ENCODE measurements at regions of chr14 and their contacts with region 1.

Region 1: DNA sequence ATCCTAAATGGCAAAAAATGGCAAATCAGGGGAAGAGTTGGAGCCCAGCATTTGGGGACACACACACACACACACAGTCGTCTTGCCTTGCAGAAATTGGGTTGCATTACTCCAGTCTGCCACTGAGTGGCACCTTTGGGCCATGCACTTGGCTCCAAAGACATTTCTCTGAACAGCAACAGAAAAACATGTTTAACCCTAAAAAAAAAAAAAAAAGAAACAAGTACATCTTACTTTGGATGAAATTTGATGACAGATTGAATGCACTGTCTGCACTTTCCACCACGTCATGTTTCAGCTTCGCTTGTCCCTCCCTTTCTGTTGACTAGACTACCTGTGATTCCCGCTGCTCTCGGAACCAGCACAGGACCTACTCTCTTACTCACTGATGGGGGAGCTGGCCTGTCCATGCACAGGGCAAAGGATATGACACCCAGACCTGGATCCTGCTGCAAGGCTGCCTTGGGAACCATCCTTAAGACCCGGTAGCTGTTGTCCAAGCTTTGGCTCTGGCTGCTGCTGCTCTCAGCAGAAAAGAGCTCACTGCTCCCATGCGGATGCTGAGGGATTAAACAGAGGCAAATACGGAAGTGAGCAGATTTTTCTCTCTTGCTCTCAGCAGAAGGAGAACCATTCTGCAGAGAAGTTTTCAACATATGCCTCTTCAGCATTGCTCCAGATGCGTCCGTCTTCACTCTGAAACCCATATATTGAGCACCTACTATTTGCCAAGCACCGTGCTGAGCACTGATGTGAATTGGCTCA is 376.8 kb downstream of the DPF3 start:
- DNase-seq: peak; percentile 73
- H3K4me3 Mint-ChIP-seq: no peak overlapping the region
- H3K27ac Mint-ChIP-seq: no peak overlapping the region
- H3K4me1 Mint-ChIP-seq: peaks cover 87% of the 10 kb centered on the region
- H3K27me3 Mint-ChIP-seq: peaks cover 2% of the 10 kb centered on the region

Region 2: DNA sequence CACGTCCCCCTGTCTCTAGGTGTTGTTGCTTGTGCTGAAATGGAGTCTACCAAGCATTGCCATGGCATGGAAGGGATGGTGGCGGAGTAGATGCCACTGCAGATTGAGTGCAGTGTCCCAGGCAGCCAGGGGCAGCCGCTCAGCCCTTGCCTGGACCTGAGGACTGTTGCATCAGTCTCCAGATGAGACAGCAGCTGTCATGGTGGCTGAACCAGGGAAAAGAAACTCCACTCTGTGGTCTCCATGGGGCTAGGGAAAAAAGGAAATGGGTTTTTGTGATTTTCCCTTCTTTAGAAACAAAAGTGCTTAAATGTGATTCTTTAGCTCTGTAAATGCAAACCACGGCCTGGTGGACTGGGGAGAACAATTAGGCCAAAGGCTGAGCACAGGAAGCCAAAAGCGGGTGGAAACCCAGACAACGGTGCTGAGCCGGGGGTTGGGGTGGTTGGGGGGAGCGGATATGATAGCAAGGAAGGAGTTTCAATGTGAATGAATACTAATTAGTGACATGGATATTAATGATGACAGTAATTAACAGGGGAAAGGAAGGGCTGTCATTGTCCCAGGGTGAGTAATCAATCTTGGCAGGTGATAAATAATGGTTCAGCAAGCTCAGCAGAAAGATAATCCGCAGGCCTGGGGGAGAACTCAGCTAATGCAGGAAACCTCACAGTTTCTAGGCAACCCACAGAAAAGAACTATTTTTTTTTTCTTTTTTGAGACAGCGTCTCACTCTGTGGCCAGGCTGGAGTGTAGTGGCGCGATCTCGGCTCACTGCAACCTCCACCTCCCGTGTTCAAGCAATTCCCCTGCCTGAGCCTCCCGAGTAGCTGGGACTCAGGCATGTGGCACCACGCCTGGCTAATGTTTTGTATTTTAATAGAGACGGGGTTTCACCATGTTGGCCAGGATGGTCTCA is 65.8 kb before region 1 on chr14:
- intact Hi-C with region 1: loop called (anchors 2 kb)
- DNase-seq: peak; percentile 41
- H3K4me3 Mint-ChIP-seq: peak overlapping the region; percentile 19
- H3K27ac Mint-ChIP-seq: peak overlapping the region; percentile 84
- H3K4me1 Mint-ChIP-seq: peaks cover 65% of the 10 kb centered on the region
- H3K27me3 Mint-ChIP-seq: peaks cover 1% of the 10 kb centered on the region

Region 3: DNA sequence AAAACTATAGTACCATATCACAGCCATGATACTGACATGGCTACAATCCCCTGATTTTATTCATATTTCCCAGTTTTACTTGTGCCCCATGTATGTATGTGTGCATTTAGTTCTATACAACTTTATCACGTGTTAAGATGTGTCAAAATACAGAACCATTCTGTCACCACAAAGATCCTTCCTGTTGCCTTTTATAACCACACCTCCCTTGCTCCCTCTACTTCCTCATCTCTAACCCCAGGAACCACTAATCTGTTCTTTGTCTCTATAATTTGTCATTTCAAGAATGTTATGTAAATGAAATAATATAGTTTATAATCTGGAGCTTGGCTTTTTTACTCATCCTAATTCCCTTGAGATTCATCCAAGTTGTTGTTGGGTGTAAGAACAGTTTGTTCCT is 18.4 kb after region 1 on chr14:
- intact Hi-C with region 1: loop called (anchors 1 kb)
- DNase-seq: peak; percentile 14
- H3K4me3 Mint-ChIP-seq: no peak overlapping the region
- H3K27ac Mint-ChIP-seq: peak overlapping the region; percentile 52
- H3K4me1 Mint-ChIP-seq: peaks cover 76% of the 10 kb centered on the region
- H3K27me3 Mint-ChIP-seq: peaks cover 4% of the 10 kb centered on the region

Region 4: DNA sequence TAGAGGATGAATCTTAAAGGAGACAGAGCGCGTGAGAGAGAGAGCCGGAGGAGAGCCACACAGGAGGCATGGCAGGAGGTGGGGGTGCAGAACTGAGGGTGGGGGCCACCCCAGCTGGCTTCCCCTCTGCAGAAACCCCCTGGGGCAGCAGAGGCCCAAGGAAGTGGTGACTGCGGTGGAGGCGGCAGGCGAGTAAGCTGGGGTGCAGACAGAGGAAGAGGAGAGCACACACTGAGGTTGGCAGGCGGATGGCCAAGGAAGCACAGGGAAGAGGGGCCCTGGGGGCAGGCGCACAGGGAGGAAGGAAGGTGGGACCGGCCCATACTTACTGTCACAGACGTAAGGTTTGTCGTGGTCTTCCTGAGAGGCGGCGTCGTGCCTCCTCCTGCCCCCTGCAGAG is 197.0 kb after region 1 on chr14:
- intact Hi-C with region 1: loop called (anchors 2 kb)
- DNase-seq: peak; percentile 55
- H3K4me3 Mint-ChIP-seq: peak overlapping the region; percentile 40
- H3K27ac Mint-ChIP-seq: peak overlapping the region; percentile 36
- H3K4me1 Mint-ChIP-seq: peaks cover 37% of the 10 kb centered on the region
- H3K27me3 Mint-ChIP-seq: no peaks in the 10 kb centered on the region

Region 5: DNA sequence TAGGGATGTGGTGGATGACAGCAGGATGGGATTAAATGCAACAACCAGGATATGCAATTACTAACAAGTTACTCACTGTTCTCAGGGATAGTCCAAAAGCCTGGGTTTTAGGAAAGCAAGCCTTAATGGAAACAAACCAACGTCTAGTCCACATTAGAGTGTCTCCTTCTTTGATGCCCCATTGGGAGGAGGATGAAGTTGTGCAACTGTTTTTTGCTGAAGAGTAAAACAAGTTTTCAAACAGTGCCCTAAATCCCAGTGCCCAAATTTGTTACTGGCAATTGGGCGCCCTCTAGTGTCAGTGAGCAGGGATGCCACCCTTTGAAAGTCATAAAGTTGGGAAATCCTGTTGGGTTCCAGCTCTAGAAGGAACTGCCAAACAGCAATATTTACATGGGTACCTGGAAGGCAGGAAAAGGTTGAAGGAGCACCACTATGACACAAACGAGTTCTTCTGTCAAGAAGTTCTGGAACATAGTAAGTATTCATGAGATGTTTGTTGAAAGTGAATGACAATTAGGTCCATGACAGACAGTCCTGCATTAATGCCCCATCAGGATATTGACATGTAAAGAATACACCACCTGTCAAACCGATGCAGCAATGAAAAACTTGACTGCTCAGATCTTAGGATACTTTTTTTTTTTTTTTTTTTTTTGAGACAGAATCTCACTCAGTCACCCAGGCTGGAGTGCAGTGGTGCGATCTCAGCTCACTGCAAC is 387.9 kb after region 1 on chr14:
- intact Hi-C with region 1: loop called (anchors 1 kb)
- DNase-seq: peak; percentile 55
- H3K4me3 Mint-ChIP-seq: no peak overlapping the region
- H3K27ac Mint-ChIP-seq: no peak overlapping the region
- H3K4me1 Mint-ChIP-seq: peaks cover 31% of the 10 kb centered on the region
- H3K27me3 Mint-ChIP-seq: peaks cover 19% of the 10 kb centered on the region

Region 6: DNA sequence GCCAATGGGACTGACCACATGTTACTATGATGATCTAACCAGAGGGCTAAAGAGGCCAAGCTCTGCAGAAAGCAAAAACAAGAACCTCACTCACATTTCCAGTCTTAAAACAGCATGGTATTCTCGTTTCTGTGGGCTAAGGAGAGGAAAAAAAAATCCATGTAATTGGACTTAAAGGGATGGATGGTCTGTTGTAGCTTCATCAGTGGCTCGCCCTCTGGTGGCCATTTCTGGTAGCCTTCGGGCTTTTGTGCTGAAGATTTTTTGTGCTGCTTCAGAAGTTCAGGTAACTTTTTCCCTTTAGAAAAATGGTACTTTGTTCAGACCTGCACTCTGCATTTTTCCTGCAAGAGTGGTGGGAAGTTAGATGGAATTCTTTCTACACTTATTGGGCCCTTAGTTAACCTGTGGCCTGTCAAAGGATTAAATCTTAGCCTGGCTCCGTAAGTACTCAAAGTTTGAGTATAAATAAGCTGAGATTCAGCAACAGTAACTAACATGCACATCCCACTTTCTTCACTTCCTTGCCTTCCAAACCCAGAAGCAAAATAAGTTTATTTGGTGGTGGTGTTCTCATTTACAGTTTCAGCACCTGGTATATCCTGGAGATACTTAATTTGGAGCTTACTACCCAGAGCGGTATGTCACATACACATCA is 431.5 kb after region 1 on chr14:
- intact Hi-C with region 1: loop called (anchors 1 kb)
- DNase-seq: peak; percentile 41
- H3K4me3 Mint-ChIP-seq: no peak overlapping the region
- H3K27ac Mint-ChIP-seq: no peak overlapping the region
- H3K4me1 Mint-ChIP-seq: peaks cover 5% of the 10 kb centered on the region
- H3K27me3 Mint-ChIP-seq: no peaks in the 10 kb centered on the region